ENCODE measurements at regions of chr17 and their contacts with region 1.

Region 1: DNA sequence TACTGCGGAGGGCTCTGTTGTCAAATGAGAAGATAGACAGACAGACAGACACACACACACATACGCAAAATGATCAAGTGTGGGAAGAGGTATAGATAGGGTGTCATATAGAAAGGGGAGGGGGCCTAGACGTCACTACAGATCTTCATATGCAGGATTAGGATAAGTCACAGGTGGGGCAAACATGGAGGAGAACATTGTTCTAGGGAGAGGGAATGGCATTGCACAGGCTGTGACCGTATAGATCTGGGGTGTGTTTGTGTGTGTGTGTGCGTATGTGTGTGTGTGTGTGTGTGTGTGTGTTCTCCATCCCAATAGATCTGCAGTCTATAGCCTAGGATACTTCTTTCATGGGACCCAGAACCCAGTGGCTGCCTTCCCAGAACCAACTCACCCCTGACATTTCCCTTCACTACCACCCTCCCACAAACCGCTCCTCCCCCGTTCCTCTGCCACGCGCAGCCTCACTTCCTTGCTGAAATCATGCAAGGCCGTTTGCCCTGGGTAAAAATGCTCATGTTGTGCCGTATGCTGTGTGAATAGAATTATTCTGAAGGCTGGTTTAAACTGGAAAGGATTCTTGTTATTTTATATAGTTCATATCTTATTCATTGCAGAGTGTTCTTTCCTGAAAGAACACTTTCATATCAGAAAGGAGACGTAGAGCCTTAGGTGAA is 50.5 kb upstream of the CCL1 start:
- DNase-seq: no peak
- H3K4me3 ChIP-seq: no peak overlapping the region
- H3K27ac ChIP-seq: no peak overlapping the region
- H3K4me1 ChIP-seq: no peaks in the 10 kb centered on the region
- H3K27me3 ChIP-seq: no peaks in the 10 kb centered on the region
- CTCF ChIP-seq: no peak
- POLR2A ChIP-seq: no peak

Region 2: GRCh38 chr17:34347063-34347462 is 66.5 kb before region 1 on chr17:
- intact Hi-C with region 1: no loop called
- DNase-seq: no peak
- H3K4me3 ChIP-seq: no peak overlapping the region
- H3K27ac ChIP-seq: no peak overlapping the region
- H3K4me1 ChIP-seq: no peaks in the 10 kb centered on the region
- H3K27me3 ChIP-seq: no peaks in the 10 kb centered on the region
- CTCF ChIP-seq: no peak
- POLR2A ChIP-seq: no peak

Region 3: DNA sequence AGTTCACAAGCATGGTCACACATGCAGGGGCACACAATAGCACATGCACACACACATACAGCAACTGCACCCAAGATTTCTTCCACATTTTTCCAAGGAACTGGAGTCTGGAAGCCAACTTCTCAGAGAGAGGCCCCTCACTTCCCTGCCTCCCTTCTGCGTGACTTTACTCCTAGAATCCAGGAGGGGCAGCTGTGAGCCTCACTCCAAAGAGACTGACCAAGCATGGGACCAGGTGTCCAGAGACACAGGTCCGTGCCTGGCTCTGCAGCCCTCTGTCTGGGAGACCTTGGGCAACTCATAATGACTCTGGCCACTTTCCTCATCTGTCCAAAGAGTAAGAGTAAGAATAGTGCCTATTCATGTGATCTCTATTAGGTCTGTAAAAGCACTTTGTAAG is 61.1 kb after region 1 on chr17:
- intact Hi-C with region 1: loop called (anchors 10 kb)
- DNase-seq: no peak
- H3K4me3 ChIP-seq: no peak overlapping the region
- H3K27ac ChIP-seq: no peak overlapping the region
- H3K4me1 ChIP-seq: no peaks in the 10 kb centered on the region
- H3K27me3 ChIP-seq: no peaks in the 10 kb centered on the region
- CTCF ChIP-seq: no peak
- POLR2A ChIP-seq: no peak